ENCODE measurements at regions of chr10 and their contacts with region 1.

Region 1: GRCh38 chr10:90885176-90885575 is 13.4 kb downstream of the RPP30 start:
- DNase-seq: no peak
- ATAC-seq: no peak
- H3K4me3 ChIP-seq: no peak overlapping the region
- H3K4me3 Mint-ChIP-seq: no peak overlapping the region
- H3K27ac ChIP-seq: no peak overlapping the region
- H3K27ac Mint-ChIP-seq: no peak overlapping the region
- H3K4me1 ChIP-seq: no peaks in the 10 kb centered on the region
- H3K4me1 Mint-ChIP-seq: no peaks in the 10 kb centered on the region
- H3K27me3 ChIP-seq: no peaks in the 10 kb centered on the region
- H3K27me3 Mint-ChIP-seq: no peaks in the 10 kb centered on the region
- CTCF ChIP-seq: no peak

Region 2: DNA sequence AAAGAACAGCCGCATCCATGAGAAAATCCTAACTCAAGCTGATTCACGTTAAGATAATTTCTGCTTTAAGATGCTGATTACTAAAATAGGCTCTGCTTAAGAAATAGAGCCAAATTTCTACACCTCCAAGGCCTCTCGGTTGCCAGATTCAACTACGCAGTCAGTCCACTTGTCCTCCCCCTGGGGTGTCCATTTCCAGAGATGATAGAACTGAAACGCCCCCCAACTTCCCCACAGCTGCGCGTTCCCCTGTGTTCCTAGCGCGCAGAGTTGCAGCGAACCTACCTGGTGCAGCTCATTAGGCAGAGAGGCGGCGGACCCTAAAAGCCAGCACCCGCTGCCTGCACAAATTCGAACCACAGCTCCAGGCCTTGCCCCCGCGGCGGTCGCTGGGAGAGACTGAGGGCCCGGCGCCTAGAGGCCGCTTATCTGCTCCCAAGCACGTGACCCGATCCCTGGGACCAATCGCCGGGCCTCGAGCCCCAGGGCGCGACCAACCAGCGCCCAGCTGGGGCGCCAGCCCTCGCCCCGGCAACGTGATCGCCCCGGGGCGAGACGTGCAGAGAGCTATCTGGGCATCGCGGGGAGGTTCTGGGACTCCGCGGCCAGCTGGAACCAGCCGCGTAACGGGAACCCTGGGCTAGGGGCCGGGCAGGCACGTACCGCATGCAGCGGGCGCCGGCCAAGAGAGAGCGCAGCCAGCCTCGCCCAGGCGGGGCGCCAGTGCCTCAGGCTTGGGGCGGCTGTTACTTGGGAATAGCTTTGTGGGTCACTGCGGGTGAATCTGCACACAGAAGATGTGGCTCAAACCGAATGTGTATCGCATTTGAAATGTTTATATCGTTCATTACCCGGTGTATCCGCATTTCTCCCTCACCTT is 747.7 kb after region 1 on chr10 and contains the start of gene PPP1R3C:
- CTCF ChIA-PET with region 1: no interaction called
- POLR2A ChIA-PET with region 1: no interaction called
- intact Hi-C with region 1: loop called in 1 of 2 experiments (anchors 5 kb)
- DNase-seq: peak in 6 of 9 experiments; percentile 9 to 47 (median 17)
- ATAC-seq: peak; percentile 46
- H3K4me3 ChIP-seq: peak within 1 kb of the TSS in 1 of 2 experiments; percentile 54
- H3K4me3 Mint-ChIP-seq: peak within 1 kb of the TSS; percentile 69
- H3K27ac ChIP-seq: no peak within 1 kb of the TSS
- H3K27ac Mint-ChIP-seq: no peak within 1 kb of the TSS
- H3K4me1 ChIP-seq: peaks cover 15% of the 10 kb centered on the region
- H3K4me1 Mint-ChIP-seq: peaks cover 9% of the 10 kb centered on the region
- H3K27me3 ChIP-seq: peaks cover 3 to 4% of the 10 kb centered on the region in 2 experiments
- H3K27me3 Mint-ChIP-seq: peaks cover 59% of the 10 kb centered on the region
- CTCF ChIP-seq: no peak
- total RNA-seq, gene PPP1R3C: not detected

Measured in CD8-positive, alpha-beta T cell (primary cell).